Right lobe of liver (tissue), 6 donors: ENCODE measurements at regions of chr17 and their contacts with region 1.

Region 1: GRCh38 chr17:76515274-76515949 is 14.2 kb upstream of the RHBDF2 start:
- DNase-seq: no peak
- ATAC-seq: peak; percentile 37 to 64 (median 56)
- H3K4me3 ChIP-seq: no peak overlapping the region
- H3K27ac ChIP-seq: peak overlapping the region in 2 of 3 donors; percentile 43 to 51
- H3K4me1 ChIP-seq: no peaks in the 10 kb centered on the region
- H3K27me3 ChIP-seq: no peaks in the 10 kb centered on the region
- CTCF ChIP-seq: no peak
- POLR2A ChIP-seq: no peak

Region 2: DNA sequence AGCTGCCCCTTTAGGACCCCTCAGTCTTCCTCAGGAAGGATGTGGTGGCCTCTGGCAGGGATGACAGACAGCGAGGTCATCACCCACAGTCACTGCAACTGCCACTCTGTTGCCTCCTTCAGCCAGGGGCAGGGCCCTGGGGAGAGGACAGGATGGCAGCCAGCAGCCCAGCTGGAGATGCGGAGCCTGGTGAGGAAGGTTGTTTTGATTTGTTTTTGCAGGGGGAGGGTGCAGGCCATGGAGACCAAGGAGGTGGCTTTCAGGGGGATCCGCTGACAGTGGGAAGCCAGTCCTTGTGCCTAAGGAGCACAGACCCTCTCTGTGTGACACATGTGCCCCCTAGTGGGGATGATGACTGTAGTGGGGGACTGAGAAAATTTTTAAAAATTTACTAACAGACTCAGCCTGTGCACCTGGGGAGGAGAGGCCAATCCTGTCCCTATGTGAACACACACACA is 31.8 kb after region 1 on chr17:
- intact Hi-C with region 1: no loop called
- DNase-seq: no peak
- ATAC-seq: peak; percentile 42 to 60 (median 52)
- H3K4me3 ChIP-seq: no peak overlapping the region
- H3K27ac ChIP-seq: no peak overlapping the region
- H3K4me1 ChIP-seq: peaks cover 0 to 58% (median 14%) of the 10 kb centered on the region in 4 donors
- H3K27me3 ChIP-seq: no peaks in the 10 kb centered on the region
- CTCF ChIP-seq: peak; percentile 54 to 60 (median 56)
- POLR2A ChIP-seq: no peak

Region 3: DNA sequence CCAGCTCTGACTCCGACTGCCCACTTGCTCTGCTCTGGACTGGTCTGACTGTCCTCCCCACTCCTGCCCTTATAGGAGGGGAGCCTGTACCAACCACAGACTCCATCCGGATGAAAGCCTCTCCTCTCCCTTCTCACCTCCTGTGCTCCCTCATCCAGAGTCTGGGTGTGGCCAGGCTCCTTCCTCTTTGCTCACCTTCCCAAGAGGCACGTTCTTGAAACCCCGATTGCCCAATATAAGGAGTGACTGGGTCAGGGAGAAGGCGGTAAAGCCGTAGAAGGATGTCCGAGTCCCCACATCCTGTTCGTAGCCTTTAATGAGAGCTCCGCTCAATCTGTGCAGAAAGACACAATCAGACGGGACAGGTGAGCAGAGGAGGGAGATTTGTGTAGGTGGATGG is 111.0 kb after region 1 on chr17:
- intact Hi-C with region 1: loop called in 1 of 2 experiments (anchors 5 kb)
- DNase-seq: no peak
- ATAC-seq: peak in 1 of 4 donors; percentile 4
- H3K4me3 ChIP-seq: no peak overlapping the region
- H3K27ac ChIP-seq: no peak overlapping the region
- H3K4me1 ChIP-seq: no peaks in the 10 kb centered on the region
- H3K27me3 ChIP-seq: no peaks in the 10 kb centered on the region
- CTCF ChIP-seq: no peak
- POLR2A ChIP-seq: no peak